ENCODE measurements at regions of chr7 and their contacts with region 1.

Region 1: GRCh38 chr7:40057292-40057691 is 77.1 kb downstream of the MPLKIP start:
- DNase-seq: no peak
- ATAC-seq: no peak
- H3K4me3 ChIP-seq: no peak overlapping the region
- H3K27ac ChIP-seq: no peak overlapping the region
- H3K4me1 ChIP-seq: no peaks in the 10 kb centered on the region
- H3K27me3 ChIP-seq: no peaks in the 10 kb centered on the region
- CTCF ChIP-seq: no peak
- EP300 ChIP-seq: no peak
- POLR2A ChIP-seq: no peak
- RAD21 ChIP-seq: no peak

Region 2: DNA sequence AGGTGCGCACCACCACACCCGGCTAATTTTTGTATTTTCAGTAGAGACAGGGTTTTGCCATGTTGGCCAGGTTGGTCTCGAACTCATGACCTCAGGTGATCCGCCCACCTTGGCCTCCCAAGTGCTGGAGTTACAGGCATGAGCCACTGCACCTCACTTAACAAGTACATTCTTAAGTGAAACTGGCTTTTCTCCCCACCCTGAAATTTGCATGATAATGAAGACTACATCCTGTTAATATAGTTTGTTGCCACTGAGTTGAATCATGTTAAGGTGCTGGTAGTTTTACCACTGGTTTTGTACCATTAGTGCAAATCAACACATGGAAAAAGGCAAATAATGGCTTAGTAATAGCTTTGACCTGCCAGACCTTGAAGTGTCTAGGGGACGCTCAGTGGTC is 15.0 kb after region 1 on chr7:
- CTCF ChIA-PET with region 1: interaction called, 3 read pairs
- POLR2A ChIA-PET with region 1: no interaction called
- RAD21 ChIA-PET with region 1: no interaction called
- SMC1A ChIA-PET with region 1: no interaction called
- in situ Hi-C with region 1: no loop called
- intact Hi-C with region 1: loop called (anchors 2 kb)
- DNase-seq: no peak
- ATAC-seq: no peak
- H3K4me3 ChIP-seq: no peak overlapping the region
- H3K27ac ChIP-seq: no peak overlapping the region
- H3K4me1 ChIP-seq: no peaks in the 10 kb centered on the region
- H3K27me3 ChIP-seq: no peaks in the 10 kb centered on the region
- CTCF ChIP-seq: no peak
- EP300 ChIP-seq: no peak
- POLR2A ChIP-seq: no peak
- RAD21 ChIP-seq: no peak

Measured in GM12878 (cell line).